HCT116 (cell line): ENCODE measurements at regions of chr3 and their contacts with region 1.

Region 1: DNA sequence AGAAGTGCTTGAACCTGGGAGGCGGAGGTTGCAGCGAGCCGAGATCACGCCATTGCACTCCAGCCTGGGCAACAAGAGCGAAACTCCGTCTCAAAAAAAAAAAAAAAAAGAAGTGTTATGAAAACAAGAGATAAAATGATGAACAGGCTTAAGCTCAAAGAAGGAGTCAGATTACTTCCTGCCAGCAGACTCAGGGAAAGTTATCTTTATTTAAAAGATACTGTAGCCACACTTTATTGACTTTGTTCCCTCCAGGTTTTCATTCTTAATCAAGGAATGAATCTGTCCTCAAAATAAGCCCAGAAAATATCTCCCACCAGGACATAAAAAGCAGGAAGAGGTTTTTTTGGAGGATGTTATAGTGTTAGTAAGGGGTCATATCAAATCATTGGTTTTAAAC is 176.5 kb upstream of the KCNMB2 start:
- DNase-seq: no peak
- ATAC-seq: no peak
- H3K4me3 ChIP-seq: no peak overlapping the region
- H3K27ac ChIP-seq: no peak overlapping the region
- H3K4me1 ChIP-seq: no peaks in the 10 kb centered on the region
- H3K27me3 ChIP-seq: no peaks in the 10 kb centered on the region
- CTCF ChIP-seq: no peak
- POLR2A ChIP-seq: no peak
- RAD21 ChIP-seq: no peak

Region 2: GRCh38 chr3:177855021-177855420 is 504.7 kb before region 1 on chr3:
- CTCF ChIA-PET with region 1: no interaction called
- POLR2A ChIA-PET with region 1: no interaction called
- RAD21 ChIA-PET with region 1: no interaction called
- intact Hi-C with region 1: loop called (anchors 5 kb)
- DNase-seq: no peak
- ATAC-seq: no peak
- H3K4me3 ChIP-seq: no peak overlapping the region
- H3K27ac ChIP-seq: no peak overlapping the region
- H3K4me1 ChIP-seq: no peaks in the 10 kb centered on the region
- H3K27me3 ChIP-seq: no peaks in the 10 kb centered on the region
- CTCF ChIP-seq: no peak
- POLR2A ChIP-seq: no peak
- RAD21 ChIP-seq: no peak

Region 3: GRCh38 chr3:178275793-178276192 is 83.9 kb before region 1 on chr3:
- CTCF ChIA-PET with region 1: no interaction called
- POLR2A ChIA-PET with region 1: no interaction called
- RAD21 ChIA-PET with region 1: no interaction called
- intact Hi-C with region 1: no loop called
- DNase-seq: no peak
- ATAC-seq: no peak
- H3K4me3 ChIP-seq: no peak overlapping the region
- H3K27ac ChIP-seq: no peak overlapping the region
- H3K4me1 ChIP-seq: no peaks in the 10 kb centered on the region
- H3K27me3 ChIP-seq: no peaks in the 10 kb centered on the region
- CTCF ChIP-seq: no peak
- POLR2A ChIP-seq: no peak
- RAD21 ChIP-seq: no peak